GM10248 (cell line): ENCODE measurements at regions of chr3 and their contacts with region 1.

Region 1: DNA sequence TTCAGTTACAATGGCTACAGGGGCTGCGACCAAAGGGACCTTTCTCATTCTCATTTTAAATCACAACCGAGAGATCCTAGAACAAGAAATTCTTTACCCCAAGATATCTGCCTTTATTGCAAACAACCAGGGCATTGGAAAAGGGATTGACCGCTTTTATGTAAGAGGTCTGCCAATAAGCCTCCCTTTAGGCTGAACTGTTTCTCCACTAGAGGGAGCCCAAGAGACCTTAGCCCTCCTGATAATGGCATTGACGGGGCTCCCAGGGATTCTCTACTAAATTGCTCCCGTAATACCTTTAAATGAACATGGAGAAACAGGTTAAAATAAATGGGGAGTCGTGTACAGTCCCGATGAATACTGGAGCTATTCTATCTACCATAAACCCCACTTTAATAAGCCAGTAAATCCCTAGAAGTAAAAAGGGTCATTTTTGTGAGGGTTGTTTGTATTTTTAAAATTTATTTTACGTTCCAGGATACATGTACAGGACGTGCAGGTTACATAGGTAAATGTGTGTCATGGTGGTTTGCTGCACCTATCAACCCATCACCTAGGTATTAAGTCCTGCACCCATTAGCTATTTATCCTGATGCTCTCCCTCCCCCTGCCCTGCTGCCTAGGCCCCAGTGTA is 7.5 kb upstream of the IGSF10 start:
- DNase-seq: peak; percentile 49
- CTCF ChIP-seq: peak; percentile 79

Region 2: GRCh38 chr3:151439652-151440129 is 28.7 kb before region 1 on chr3:
- CTCF ChIA-PET with region 1: interaction called, 16 read pairs
- POLR2A ChIA-PET with region 1: no interaction called
- DNase-seq: peak; percentile 41
- CTCF ChIP-seq: peak; percentile 67

Region 3: DNA sequence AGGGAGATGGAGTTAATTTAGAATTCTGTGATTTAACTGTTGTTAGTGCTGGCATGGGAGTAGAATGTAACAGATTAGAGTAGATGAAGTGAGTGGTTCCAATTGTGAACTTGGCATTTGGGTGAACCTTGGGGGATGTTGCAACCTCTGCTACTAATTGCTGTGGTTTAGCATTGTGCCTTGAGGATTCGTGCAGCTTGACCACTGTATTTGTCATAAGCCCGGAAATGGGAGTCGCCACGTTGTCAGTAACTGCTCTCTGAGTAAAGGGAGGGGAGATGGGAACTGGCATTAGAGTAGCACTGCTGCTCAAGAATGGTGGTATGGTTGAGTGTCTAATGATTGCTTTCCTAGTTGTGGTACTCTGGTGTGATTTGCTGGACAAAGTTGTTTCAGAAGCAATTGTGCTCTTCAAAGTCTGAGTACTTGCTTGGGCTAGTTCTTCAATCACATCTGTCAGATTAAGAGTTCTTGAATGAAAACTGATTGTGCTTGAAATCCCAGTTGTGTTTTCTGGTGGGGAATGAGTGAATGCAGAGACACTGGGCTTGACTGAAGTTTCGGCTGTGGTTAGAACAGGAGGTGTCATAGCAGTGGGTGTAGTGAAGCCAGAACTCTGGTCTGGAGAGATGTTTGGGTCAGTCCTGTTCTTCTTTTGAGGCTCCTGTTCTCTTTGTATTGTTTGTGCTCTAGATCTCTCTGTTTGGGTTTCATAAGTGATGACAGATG is 23.0 kb before region 1 on chr3:
- CTCF ChIA-PET with region 1: interaction called, 24 read pairs
- POLR2A ChIA-PET with region 1: no interaction called
- DNase-seq: no peak
- CTCF ChIP-seq: no peak

Region 4: GRCh38 chr3:151483961-151484520 is 15.6 kb after region 1 on chr3:
- CTCF ChIA-PET with region 1: interaction called, 34 read pairs
- POLR2A ChIA-PET with region 1: no interaction called
- DNase-seq: no peak
- CTCF ChIP-seq: no peak

Region 5: DNA sequence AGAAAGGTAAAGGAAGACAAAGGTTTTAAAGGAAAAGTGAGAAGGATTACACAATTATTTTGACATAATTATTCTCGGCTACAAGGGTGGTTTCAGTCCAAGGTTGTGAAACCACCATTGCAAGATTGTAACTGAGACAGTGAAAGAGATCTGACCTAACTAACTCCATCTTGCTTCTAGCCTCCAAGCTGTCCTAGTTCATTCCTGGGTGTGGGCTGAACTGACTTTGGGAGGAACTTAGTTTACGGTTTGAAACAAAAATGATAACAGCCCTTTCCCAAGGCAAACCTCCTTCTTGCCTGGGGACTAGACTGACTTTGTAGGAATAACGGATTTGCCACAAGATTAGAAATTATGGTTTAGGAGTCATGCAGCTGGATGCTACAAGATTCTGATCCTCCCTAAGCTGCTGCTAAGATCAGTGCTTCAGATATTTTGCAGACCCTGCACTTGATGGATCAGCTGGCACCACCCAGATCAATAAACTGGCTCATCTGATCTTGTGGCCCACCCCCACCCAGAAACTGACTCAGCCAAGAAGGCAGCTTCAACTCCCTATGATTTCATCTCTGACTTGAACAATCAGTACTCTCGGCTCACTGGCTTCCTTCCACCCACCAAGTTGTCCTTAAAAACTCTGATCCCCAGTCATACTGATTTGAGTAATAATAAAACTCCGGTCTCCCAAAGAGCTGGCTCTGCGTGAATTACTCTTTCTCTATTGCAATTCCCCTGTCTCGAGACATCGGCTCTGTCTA is 207.6 kb after region 1 on chr3:
- CTCF ChIA-PET with region 1: no interaction called
- POLR2A ChIA-PET with region 1: no interaction called
- DNase-seq: no peak
- CTCF ChIP-seq: no peak

Region 6: DNA sequence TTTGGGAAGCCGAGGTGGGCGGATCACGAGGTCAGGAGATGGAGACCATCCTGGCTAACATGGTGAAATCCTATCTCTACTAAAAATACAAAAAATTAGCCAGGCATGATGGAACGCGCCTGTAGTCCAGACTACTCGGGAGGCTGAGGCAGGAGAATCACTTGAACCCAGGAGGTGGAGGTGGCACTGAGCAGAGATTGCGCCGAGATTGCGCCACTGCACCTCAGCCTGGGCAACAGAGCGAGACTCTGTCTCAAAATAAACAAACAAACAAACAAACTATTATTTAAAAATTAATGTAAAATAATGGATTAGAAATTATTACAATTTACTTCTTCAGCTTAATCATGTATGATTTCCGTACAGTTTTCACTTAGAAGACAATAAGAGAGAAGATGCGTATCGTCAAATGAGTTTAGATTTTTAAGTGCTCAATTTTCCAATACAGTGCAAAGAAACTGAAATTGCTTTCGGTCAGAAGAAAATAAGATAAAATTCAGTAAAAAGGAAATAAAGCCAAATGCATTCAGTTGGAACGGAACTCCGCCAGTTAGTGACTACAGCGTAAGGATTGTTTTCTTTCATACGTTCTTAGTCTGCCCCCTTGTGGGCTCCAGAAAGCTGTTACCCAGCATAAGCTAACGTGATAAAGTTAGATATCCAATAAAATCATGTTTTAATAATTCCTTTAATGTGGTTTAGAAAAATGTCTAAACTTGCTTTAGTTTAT is 370.3 kb after region 1 on chr3:
- CTCF ChIA-PET with region 1: interaction called, 23 read pairs
- POLR2A ChIA-PET with region 1: no interaction called
- DNase-seq: peak; percentile 43
- CTCF ChIP-seq: peak; percentile 76

Region 7: GRCh38 chr3:151918253-151919029 is 450.0 kb after region 1 on chr3:
- CTCF ChIA-PET with region 1: interaction called, 41 read pairs
- POLR2A ChIA-PET with region 1: no interaction called
- DNase-seq: peak; percentile 55
- CTCF ChIP-seq: peak; percentile 59